MCF 10A (cell line): ENCODE measurements at regions of chrX and their contacts with region 1.

Region 1: GRCh38 chrX:134512566-134512965 is 52.6 kb downstream of the HPRT1 start:
- DNase-seq: peak; percentile 62
- H3K4me3 Mint-ChIP-seq: no peak overlapping the region
- H3K27ac Mint-ChIP-seq: peak overlapping the region; percentile 84
- H3K4me1 Mint-ChIP-seq: peaks cover 17% of the 10 kb centered on the region
- H3K27me3 Mint-ChIP-seq: peaks cover 11% of the 10 kb centered on the region
- CTCF ChIP-seq: no peak

Region 2: DNA sequence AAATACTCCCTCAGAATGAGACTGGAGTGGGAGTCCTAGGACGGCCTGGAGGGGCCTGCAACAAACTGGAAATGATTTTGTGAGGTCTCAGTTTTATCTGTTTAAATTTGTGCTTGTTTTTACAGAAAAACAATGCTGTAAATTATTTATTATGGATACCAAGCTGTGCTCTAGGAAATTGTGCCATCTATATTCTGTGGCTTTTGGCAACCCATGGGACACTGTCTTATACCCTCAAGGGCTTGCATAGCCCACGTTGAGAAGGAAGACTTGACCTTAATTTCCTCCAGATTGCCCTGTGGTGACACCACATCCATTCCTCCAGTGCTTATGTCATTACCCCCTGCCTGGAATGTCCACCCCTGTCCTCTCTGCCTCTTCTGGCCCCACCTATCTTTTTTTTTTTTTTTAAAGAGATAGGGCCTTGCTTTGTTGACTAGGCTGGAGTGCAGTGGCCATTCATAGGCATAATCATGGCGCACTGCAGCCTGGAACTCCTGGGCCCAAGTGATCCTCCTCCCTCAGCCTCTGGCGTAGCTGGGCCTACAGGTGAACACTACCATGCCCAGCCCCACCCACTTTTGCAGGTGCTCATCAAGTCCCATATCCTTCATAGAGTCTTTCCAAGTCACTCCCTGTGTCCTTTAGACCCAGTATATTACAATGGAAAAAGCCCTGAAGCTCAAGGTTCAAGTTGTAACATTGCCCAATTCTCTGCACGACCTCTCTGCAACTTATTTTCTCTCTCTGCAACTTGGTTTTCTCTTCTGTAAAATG is 24.8 kb after region 1 on chrX:
- CTCF ChIA-PET with region 1: no interaction called
- POLR2A ChIA-PET with region 1: no interaction called
- intact Hi-C with region 1: no loop called
- DNase-seq: peak; percentile 37
- H3K4me3 Mint-ChIP-seq: no peak overlapping the region
- H3K27ac Mint-ChIP-seq: no peak overlapping the region
- H3K4me1 Mint-ChIP-seq: peaks cover 1% of the 10 kb centered on the region
- H3K27me3 Mint-ChIP-seq: peaks cover 14% of the 10 kb centered on the region
- CTCF ChIP-seq: no peak

Region 3: GRCh38 chrX:134718105-134718965 is 205.8 kb after region 1 on chrX:
- CTCF ChIA-PET with region 1: interaction called, 3 read pairs
- POLR2A ChIA-PET with region 1: no interaction called
- intact Hi-C with region 1: loop called (anchors 1 kb)
- DNase-seq: peak; percentile 91
- H3K4me3 Mint-ChIP-seq: no peak overlapping the region
- H3K27ac Mint-ChIP-seq: peak overlapping the region; percentile 84
- H3K4me1 Mint-ChIP-seq: peaks cover 10% of the 10 kb centered on the region
- H3K27me3 Mint-ChIP-seq: no peaks in the 10 kb centered on the region
- CTCF ChIP-seq: no peak